ENCODE measurements at regions of chr11 and their contacts with region 1.

Region 1: DNA sequence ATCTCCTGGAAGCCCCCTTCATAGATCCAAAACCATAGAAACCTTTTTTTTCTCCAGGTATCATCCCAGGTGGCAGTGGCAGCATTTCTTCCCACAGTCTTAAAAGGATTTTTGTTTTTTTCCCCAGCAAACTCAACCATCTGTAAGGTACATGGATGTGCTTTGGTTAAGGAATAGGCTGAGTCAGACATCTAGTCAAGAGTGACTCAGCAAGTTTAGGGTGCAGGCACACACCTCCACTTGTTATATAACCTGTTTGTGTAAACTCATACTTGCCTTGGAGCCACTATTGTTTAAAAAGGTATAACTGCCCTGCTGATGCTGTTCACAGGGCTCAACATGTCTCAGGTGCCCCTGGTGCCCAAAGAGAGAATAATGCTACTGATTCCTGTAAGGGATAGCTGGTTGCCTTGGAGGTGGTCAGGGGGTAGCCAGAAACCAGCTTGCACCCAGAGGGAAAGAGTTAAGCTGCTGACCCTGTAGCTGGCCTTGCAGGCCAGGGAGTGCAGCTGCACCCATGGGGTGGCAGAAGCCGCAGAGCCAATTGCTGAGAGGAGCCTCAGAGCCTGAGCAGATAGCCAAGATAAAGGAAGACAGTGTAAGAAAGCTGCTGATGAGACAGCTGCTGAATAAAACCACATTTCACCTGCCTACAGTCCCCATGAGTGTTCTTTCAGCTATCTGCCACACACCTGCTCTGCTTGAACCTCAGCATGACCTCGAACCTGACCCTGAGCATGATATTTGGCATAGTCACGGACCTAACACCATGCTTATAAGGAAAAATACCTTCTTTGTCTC is 1726.1 kb upstream of the RAG2 start:
- DNase-seq: no peak
- ATAC-seq: no peak
- H3K4me3 ChIP-seq: no peak overlapping the region
- H3K27ac ChIP-seq: no peak overlapping the region
- H3K4me1 ChIP-seq: no peaks in the 10 kb centered on the region
- H3K27me3 ChIP-seq: no peaks in the 10 kb centered on the region
- CTCF ChIP-seq: no peak
- POLR2A ChIP-seq: no peak
- RAD21 ChIP-seq: no peak

Region 2: GRCh38 chr11:38305682-38306081 is 18.5 kb before region 1 on chr11:
- CTCF ChIA-PET with region 1: no interaction called
- POLR2A ChIA-PET with region 1: interaction called, 10 read pairs
- dilution Hi-C with region 1: no loop called
- in situ Hi-C with region 1: no loop called
- intact Hi-C with region 1: no loop called
- DNase-seq: no peak
- ATAC-seq: no peak
- H3K4me3 ChIP-seq: no peak overlapping the region
- H3K27ac ChIP-seq: no peak overlapping the region
- H3K4me1 ChIP-seq: no peaks in the 10 kb centered on the region
- H3K27me3 ChIP-seq: no peaks in the 10 kb centered on the region
- CTCF ChIP-seq: no peak
- POLR2A ChIP-seq: no peak
- RAD21 ChIP-seq: no peak

Region 3: DNA sequence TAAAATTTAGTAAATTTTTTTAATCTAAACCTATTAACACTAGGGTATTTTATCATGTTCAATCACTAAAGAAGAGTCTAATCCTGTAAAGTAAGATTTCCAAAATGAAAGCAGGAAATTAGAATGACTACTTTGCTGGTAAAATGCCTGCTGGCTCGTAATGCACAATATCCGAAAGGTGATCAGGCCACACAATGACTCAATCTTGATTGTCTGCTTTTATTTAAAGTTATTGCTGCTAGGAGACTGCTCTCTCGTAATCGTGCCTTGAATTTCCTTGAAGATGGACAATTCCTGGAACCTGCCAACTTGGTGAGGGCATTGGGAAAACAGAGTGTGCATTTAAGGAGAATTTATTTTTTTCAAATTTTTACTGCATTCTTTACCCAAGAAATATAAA is 60.4 kb after region 1 on chr11:
- CTCF ChIA-PET with region 1: no interaction called
- POLR2A ChIA-PET with region 1: no interaction called
- dilution Hi-C with region 1: no loop called
- in situ Hi-C with region 1: no loop called
- intact Hi-C with region 1: no loop called
- DNase-seq: no peak
- ATAC-seq: no peak
- H3K4me3 ChIP-seq: no peak overlapping the region
- H3K27ac ChIP-seq: no peak overlapping the region
- H3K4me1 ChIP-seq: no peaks in the 10 kb centered on the region
- H3K27me3 ChIP-seq: no peaks in the 10 kb centered on the region
- CTCF ChIP-seq: no peak
- POLR2A ChIP-seq: no peak
- RAD21 ChIP-seq: no peak

Region 4: GRCh38 chr11:39221550-39222138 is 897.5 kb after region 1 on chr11:
- CTCF ChIA-PET with region 1: no interaction called
- POLR2A ChIA-PET with region 1: no interaction called
- dilution Hi-C with region 1: no loop called
- in situ Hi-C with region 1: no loop called
- intact Hi-C with region 1: no loop called
- DNase-seq: no peak
- ATAC-seq: no peak
- H3K4me3 ChIP-seq: no peak overlapping the region
- H3K27ac ChIP-seq: no peak overlapping the region
- H3K4me1 ChIP-seq: no peaks in the 10 kb centered on the region
- H3K27me3 ChIP-seq: no peaks in the 10 kb centered on the region
- CTCF ChIP-seq: no peak
- POLR2A ChIP-seq: no peak
- RAD21 ChIP-seq: no peak